ENCODE measurements at regions of chr2 and their contacts with region 1.

Region 1: DNA sequence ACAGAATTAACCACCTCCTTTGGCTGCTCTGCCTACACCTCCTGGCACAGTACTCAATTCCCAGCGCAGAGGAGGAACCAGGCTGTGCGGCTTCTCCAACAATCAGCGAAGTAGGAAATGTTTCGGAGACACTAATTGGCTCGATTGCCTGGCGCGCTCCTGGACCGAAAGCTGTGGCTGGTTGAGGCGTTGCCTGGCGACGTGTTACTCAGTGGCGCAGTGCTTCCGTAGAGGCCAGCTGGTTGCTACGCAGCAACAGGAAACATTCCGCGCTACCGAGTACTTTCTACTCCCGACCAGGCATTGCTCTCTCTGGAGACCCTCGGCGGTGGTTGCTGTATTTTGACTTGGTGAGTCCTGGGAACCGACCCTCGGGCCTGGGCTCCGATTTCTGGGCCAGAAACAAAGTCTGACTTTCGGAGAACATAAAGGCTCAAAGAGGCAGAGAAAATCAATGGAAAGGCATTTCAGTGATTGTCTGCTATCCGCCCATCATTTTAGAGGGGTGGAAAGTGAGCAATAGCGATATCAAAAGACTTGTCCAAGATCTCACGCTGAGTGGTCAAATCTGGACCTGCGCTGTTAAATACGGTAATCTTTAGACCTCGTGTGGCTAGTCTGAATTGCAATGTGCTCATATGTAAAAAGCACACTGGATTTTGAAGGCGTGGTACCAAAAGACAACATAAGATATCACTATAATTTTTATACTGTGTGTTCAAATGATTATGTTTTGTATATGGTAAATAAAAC is at the start of gene DNAH6:
- DNase-seq: peak; percentile 96
- H3K4me3 Mint-ChIP-seq: peak within 1 kb of the TSS; percentile 81
- H3K27ac Mint-ChIP-seq: peak within 1 kb of the TSS; percentile 88
- H3K4me1 Mint-ChIP-seq: peaks cover 6% of the 10 kb centered on the region
- H3K27me3 Mint-ChIP-seq: no peaks in the 10 kb centered on the region
- CTCF ChIP-seq: no peak
- total RNA-seq, gene DNAH6: 0.14 and 0.76 TPM in 2 replicates

Region 2: GRCh38 chr2:84495539-84496146 is 20.8 kb before region 1 on chr2:
- CTCF ChIA-PET with region 1: no interaction called
- POLR2A ChIA-PET with region 1: no interaction called
- intact Hi-C with region 1: no loop called
- DNase-seq: peak; percentile 72
- H3K4me3 Mint-ChIP-seq: no peak overlapping the region
- H3K27ac Mint-ChIP-seq: peak overlapping the region; percentile 35
- H3K4me1 Mint-ChIP-seq: peaks cover 21% of the 10 kb centered on the region
- H3K27me3 Mint-ChIP-seq: no peaks in the 10 kb centered on the region
- CTCF ChIP-seq: peak; percentile 53

Region 3: DNA sequence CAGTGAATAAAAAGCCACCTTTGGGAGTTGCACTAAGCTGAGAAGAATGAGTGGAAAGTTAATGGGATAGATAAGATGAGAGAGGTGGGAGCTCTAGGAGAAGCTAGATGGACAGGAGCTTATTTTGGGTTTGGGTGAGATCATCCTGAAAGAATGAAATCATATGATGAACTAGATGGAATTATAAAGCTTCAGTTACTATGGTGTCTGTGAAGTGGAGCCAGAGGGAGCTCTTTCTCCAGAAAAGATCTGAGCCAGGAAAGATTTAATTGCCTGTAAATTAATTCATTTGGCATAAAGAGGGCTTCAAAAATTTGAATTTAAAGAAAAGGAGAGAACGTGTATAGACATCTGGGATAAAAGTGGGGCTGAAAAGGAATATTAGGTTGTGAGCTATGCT is 10.2 kb after region 1 on chr2:
- CTCF ChIA-PET with region 1: interaction called, 14 read pairs
- POLR2A ChIA-PET with region 1: no interaction called
- intact Hi-C with region 1: no loop called
- DNase-seq: no peak
- H3K4me3 Mint-ChIP-seq: no peak overlapping the region
- H3K27ac Mint-ChIP-seq: no peak overlapping the region
- H3K4me1 Mint-ChIP-seq: no peaks in the 10 kb centered on the region
- H3K27me3 Mint-ChIP-seq: no peaks in the 10 kb centered on the region
- CTCF ChIP-seq: peak; percentile 25